Head of caudate nucleus (tissue), 42 donors: ENCODE measurements at regions of chr10 and their contacts with region 1.

Region 1: DNA sequence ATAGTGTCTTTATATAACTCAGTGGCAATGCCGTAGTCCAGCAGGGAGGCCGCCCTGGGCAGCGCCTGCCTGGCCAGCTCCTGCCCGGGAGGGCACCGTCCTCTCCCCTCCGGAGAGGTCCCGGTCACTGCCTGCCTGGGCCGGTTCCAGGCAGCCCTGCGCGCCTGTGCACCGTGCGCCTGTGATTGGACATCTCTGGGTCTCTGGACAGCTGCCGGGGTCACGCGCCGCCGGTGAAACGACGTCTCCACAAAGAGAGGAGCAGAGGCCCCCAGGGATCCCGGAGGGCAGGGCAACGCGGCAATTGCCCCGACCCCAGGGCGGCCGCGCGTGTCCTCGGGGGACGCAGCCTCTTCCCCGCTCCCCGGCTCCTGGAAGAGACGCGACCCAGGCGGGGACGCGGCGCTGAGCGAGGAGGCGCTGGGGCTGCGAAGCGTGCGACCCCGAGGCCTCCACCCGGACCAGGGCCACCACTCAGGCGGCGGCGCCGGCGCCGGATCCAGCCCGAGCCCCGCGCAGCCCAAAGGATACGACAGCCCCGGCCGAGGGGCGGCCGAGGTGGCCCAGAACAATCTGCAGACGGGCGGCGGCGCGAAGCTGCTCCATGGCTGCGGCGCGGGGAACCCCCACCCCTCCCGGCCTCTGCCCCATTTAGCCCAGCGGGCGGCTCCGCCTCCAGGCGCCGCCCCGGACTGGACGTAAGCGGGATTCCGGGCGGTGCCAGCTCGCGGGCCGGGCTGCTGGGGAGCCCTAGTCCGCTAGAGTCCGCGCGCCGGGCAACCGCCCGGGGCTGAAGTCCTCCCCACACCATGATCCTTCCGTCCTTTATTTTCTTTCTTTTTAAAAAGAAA is at the start of gene PHYH:
- DNase-seq: peak; percentile 67 to 96 (median 91)

Region 2: GRCh38 chr10:13160934-13161856 is 138.5 kb before region 1 on chr10 and contains the start of gene MCM10:
- intact Hi-C with region 1: loop called (anchors 5 kb)
- DNase-seq: peak; percentile 97 to 100 (median 99)

Region 3: DNA sequence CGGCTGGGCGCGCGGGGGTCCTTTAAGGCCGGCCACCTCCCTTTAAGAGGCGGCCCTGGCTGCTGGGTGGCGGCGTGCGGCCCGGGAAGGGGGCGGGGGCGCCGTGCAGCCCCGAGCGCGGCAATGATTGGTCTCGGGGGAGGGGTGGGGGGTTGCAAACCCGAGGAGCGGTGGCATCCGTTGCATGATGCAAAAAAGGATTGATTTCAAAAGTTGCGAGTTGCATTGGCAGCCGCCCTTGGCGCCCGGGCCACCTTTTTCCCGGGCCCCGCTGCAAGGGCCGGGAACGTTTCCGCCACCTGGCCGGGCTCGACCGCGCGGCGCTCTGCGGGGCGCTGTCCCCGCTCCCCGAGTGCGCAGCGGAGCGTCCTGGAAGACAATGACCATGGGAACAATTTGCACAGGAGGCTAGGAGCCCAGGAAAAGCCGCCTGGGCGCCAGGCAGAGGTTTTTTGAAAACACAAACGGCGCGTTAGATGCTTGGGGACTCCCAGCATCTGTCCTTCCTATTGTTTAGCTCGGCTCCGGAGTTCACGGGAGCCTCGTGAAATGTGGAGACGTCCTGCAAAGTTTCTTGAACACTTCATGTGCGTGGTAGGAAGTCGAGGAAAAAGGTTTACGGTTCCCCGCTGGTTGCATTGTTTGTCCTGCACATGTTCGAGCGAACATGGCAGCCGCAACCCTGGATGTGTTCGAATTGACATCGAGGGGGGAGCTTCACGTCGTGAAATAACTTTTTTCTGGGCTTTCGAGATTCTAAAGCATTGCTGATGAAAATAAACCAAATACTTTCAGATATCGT is 48.8 kb after region 1 on chr10 and contains the start of gene SEPHS1:
- intact Hi-C with region 1: loop called (anchors 5 kb)
- DNase-seq: peak; percentile 32 to 88 (median 76)